CD4-positive, alpha-beta T cell (primary cell): ENCODE measurements at regions of chr19 and their contacts with region 1.

Region 1: DNA sequence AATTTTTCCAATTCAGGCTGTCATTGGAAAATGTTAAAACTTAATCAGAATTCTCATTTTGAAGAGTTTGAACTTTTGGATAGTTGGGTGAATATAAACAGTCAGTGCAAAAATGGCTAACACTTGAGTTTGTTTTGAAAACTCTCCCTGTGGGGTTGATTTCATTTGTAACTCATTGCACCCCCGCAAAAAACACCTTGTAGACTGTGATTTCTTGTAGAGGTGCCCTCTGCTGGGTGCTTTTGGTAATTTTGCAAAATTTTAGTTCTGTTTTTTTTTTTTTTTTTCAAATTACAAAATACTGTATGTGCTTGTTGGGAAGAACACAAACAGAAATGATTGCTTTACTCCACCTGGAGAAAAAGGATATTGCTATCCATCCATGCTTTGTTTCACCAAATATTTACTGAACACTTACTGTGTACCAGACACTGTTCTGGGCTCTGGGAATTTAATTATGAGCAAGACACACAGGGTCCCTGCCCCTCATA is 28.2 kb upstream of the GPI start:
- DNase-seq: peak in 12 of 14 experiments; percentile 16 to 79 (median 42)
- ATAC-seq: peak; percentile 76
- H3K4me3 ChIP-seq: no peak overlapping the region
- H3K4me3 Mint-ChIP-seq: no peak overlapping the region
- H3K27ac ChIP-seq: no peak overlapping the region
- H3K27ac Mint-ChIP-seq: peak overlapping the region; percentile 74
- H3K4me1 ChIP-seq: peaks cover 5% of the 10 kb centered on the region
- H3K4me1 Mint-ChIP-seq: peaks cover 13% of the 10 kb centered on the region
- H3K27me3 ChIP-seq: no peaks in the 10 kb centered on the region
- H3K27me3 Mint-ChIP-seq: no peaks in the 10 kb centered on the region
- CTCF ChIP-seq: peak; percentile 78

Region 2: DNA sequence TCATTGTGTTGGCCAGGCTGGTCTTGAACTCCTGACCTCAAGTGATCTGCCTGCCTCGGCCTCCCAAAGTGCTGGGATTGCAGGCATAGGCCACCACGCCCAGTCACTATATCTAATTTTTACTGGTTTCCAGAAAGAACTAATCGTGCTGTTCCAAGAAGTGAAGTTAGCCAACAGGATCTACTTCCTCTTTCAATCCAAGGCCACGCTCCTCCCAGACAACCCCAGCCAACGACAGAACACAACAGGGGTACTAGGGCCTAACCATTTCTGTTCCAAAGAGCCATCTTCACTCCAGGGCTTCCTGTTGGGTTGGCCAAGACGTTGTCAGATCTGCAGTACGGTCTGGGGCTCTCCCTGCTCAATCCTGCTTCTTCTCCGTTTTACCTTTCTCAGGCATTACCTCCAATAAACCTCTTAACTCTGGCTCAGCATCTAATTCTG is 171.5 kb before region 1 on chr19:
- CTCF ChIA-PET with region 1: no interaction called
- POLR2A ChIA-PET with region 1: no interaction called
- intact Hi-C with region 1: no loop called
- DNase-seq: no peak
- ATAC-seq: no peak
- H3K4me3 ChIP-seq: no peak overlapping the region
- H3K4me3 Mint-ChIP-seq: no peak overlapping the region
- H3K27ac ChIP-seq: no peak overlapping the region
- H3K27ac Mint-ChIP-seq: no peak overlapping the region
- H3K4me1 ChIP-seq: no peaks in the 10 kb centered on the region
- H3K4me1 Mint-ChIP-seq: no peaks in the 10 kb centered on the region
- H3K27me3 ChIP-seq: no peaks in the 10 kb centered on the region
- H3K27me3 Mint-ChIP-seq: no peaks in the 10 kb centered on the region
- CTCF ChIP-seq: no peak

Region 3: GRCh38 chr19:34178274-34178610 is 158.6 kb before region 1 on chr19:
- CTCF ChIA-PET with region 1: no interaction called
- POLR2A ChIA-PET with region 1: no interaction called
- intact Hi-C with region 1: loop called (anchors 2 to 5 kb)
- DNase-seq: peak in 3 of 14 experiments; percentile 32 to 54 (median 53)
- ATAC-seq: peak; percentile 75
- H3K4me3 ChIP-seq: peak overlapping the region; percentile 6
- H3K4me3 Mint-ChIP-seq: peak overlapping the region; percentile 75
- H3K27ac ChIP-seq: no peak overlapping the region
- H3K27ac Mint-ChIP-seq: peak overlapping the region; percentile 70
- H3K4me1 ChIP-seq: peaks cover 49% of the 10 kb centered on the region
- H3K4me1 Mint-ChIP-seq: peaks cover 94% of the 10 kb centered on the region
- H3K27me3 ChIP-seq: no peaks in the 10 kb centered on the region
- H3K27me3 Mint-ChIP-seq: no peaks in the 10 kb centered on the region
- CTCF ChIP-seq: no peak

Region 4: DNA sequence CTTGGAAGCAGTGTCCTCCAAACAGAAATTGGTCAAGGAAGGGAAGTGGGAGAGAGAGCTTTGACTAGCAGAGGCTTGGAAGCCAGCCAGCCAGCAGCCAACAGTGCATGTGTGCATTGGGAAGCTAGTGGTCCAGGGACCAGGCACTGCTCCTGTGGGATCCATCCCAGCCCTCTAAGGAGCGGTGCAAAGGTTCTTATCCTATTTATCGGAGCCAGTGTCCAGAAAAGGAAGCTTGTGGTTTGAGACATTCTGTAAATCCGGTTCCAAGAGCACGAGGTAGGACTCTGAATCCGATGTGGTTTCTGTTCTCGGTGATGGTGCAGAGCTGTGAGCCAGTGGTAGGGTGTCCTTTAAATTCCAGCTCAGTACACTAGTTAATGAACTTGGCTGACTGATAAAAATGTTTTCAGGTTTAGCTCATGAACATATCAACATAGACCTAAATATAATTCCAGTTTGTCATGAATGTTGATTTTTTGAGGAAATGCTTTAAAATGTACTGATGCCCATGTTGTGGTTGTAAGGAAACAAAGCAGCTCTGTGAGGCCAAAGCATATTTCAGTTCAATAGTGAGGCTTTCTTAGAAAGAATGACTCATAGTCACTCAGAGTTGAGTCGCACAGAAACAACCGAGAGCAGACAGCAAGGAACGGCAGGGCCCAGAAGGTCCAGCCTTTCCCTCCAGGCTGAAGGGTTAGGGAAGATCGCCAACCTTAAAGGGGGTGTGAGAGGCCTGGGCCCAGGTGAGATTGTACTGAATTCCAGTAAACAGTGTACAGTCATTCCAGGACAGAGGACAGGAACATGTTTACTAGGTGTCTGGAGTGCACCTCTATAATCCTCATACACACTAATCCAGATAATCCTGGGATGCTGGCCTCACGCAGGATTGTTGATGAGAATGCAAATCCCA is 104.0 kb before region 1 on chr19:
- CTCF ChIA-PET with region 1: no interaction called
- POLR2A ChIA-PET with region 1: no interaction called
- intact Hi-C with region 1: loop called in 1 of 2 experiments (anchors 5 kb)
- DNase-seq: no peak
- ATAC-seq: no peak
- H3K4me3 ChIP-seq: no peak overlapping the region
- H3K4me3 Mint-ChIP-seq: peak overlapping the region; percentile 15
- H3K27ac ChIP-seq: no peak overlapping the region
- H3K27ac Mint-ChIP-seq: peak overlapping the region; percentile 76
- H3K4me1 ChIP-seq: peaks cover 6% of the 10 kb centered on the region
- H3K4me1 Mint-ChIP-seq: peaks cover 17% of the 10 kb centered on the region
- H3K27me3 ChIP-seq: no peaks in the 10 kb centered on the region
- H3K27me3 Mint-ChIP-seq: no peaks in the 10 kb centered on the region
- CTCF ChIP-seq: no peak

Region 5: GRCh38 chr19:34269968-34270621 is 66.7 kb before region 1 on chr19:
- CTCF ChIA-PET with region 1: interaction called, 9 read pairs
- POLR2A ChIA-PET with region 1: interaction called, 3 read pairs
- intact Hi-C with region 1: loop called in 1 of 2 experiments (anchors 1 kb)
- DNase-seq: peak; percentile 54 to 93 (median 70)
- ATAC-seq: peak; percentile 89
- H3K4me3 ChIP-seq: peak overlapping the region; percentile 41
- H3K4me3 Mint-ChIP-seq: peak overlapping the region; percentile 76
- H3K27ac ChIP-seq: peak overlapping the region; percentile 88 to 92
- H3K27ac Mint-ChIP-seq: peak overlapping the region; percentile 95
- H3K4me1 ChIP-seq: peaks cover 91% of the 10 kb centered on the region
- H3K4me1 Mint-ChIP-seq: peaks cover 86% of the 10 kb centered on the region
- H3K27me3 ChIP-seq: no peaks in the 10 kb centered on the region
- H3K27me3 Mint-ChIP-seq: no peaks in the 10 kb centered on the region
- CTCF ChIP-seq: no peak

Region 6: GRCh38 chr19:34317311-34317927 is 19.4 kb before region 1 on chr19:
- CTCF ChIA-PET with region 1: interaction called, 3 read pairs
- POLR2A ChIA-PET with region 1: interaction called, 3 read pairs
- intact Hi-C with region 1: loop called in 1 of 2 experiments (anchors 2 kb)
- DNase-seq: peak in 9 of 14 experiments; percentile 8 to 72 (median 41)
- ATAC-seq: peak; percentile 83
- H3K4me3 ChIP-seq: no peak overlapping the region
- H3K4me3 Mint-ChIP-seq: peak overlapping the region; percentile 61
- H3K27ac ChIP-seq: peak overlapping the region; percentile 16
- H3K27ac Mint-ChIP-seq: peak overlapping the region; percentile 89
- H3K4me1 ChIP-seq: peaks cover 40% of the 10 kb centered on the region
- H3K4me1 Mint-ChIP-seq: peaks cover 68% of the 10 kb centered on the region
- H3K27me3 ChIP-seq: no peaks in the 10 kb centered on the region
- H3K27me3 Mint-ChIP-seq: no peaks in the 10 kb centered on the region
- CTCF ChIP-seq: no peak

Region 7: GRCh38 chr19:34744896-34745690 is 408.3 kb after region 1 on chr19:
- CTCF ChIA-PET with region 1: no interaction called
- POLR2A ChIA-PET with region 1: no interaction called
- intact Hi-C with region 1: no loop called
- DNase-seq: no peak
- ATAC-seq: no peak
- H3K4me3 ChIP-seq: no peak overlapping the region
- H3K4me3 Mint-ChIP-seq: no peak overlapping the region
- H3K27ac ChIP-seq: no peak overlapping the region
- H3K27ac Mint-ChIP-seq: no peak overlapping the region
- H3K4me1 ChIP-seq: no peaks in the 10 kb centered on the region
- H3K4me1 Mint-ChIP-seq: no peaks in the 10 kb centered on the region
- H3K27me3 ChIP-seq: no peaks in the 10 kb centered on the region
- H3K27me3 Mint-ChIP-seq: no peaks in the 10 kb centered on the region
- CTCF ChIP-seq: no peak